K562 (cell line): ENCODE measurements at regions of chr17 and their contacts with region 1.

Region 1: DNA sequence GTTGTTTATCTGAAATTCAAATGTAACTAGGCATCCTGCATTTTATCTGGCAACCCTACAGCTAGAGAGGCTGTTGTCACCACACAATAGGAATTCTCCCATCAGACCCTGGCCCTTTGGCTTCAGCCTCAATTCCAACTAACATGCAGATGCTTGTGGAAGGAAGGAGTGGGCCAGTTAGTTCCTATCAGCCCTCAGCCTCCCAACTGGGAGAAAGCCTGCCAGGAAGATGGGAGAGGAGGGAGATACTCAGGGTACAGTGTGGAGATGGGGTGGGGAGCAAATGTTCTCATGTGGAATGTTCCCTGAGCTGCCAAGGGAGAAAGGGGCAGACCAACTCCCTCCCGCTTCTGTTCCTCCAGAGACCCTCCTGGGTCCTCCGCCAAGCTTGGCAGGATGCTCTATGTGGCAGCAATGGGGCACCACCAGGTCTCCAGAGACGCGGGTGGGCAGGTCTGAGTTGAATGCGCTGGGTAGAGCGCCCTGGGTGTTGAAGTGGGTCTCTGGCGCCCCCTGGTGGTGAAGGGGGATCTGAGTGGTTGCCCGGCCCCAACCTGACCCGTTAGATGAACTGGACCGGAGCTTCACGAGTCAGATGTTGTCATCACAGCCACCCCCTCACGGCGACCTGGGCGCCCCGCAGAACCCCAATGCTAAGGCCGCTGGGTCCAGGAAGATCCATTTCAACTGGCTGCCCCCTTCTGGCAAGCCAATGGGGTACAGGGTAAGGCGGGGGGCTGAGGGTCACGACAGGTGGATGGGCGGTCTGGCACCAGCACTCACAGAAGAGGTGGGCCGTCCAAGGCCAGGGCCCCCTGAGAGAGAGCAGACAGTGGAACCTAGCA is 15.2 kb downstream of the GALK1 start:
- DNase-seq: peak; percentile 81 to 87 (median 86)
- ATAC-seq: peak; percentile 80
- H3K4me3 ChIP-seq: no peak overlapping the region
- H3K27ac ChIP-seq: no peak overlapping the region
- H3K4me1 ChIP-seq: peaks cover 10 to 48% of the 10 kb centered on the region in 2 experiments
- H3K27me3 ChIP-seq: no peaks in the 10 kb centered on the region
- CTCF ChIP-seq: peak; percentile 92 to 94 (median 94)
- EP300 ChIP-seq: no peak
- POLR2A ChIP-seq: no peak
- RAD21 ChIP-seq: peak; percentile 67 to 83

Region 2: DNA sequence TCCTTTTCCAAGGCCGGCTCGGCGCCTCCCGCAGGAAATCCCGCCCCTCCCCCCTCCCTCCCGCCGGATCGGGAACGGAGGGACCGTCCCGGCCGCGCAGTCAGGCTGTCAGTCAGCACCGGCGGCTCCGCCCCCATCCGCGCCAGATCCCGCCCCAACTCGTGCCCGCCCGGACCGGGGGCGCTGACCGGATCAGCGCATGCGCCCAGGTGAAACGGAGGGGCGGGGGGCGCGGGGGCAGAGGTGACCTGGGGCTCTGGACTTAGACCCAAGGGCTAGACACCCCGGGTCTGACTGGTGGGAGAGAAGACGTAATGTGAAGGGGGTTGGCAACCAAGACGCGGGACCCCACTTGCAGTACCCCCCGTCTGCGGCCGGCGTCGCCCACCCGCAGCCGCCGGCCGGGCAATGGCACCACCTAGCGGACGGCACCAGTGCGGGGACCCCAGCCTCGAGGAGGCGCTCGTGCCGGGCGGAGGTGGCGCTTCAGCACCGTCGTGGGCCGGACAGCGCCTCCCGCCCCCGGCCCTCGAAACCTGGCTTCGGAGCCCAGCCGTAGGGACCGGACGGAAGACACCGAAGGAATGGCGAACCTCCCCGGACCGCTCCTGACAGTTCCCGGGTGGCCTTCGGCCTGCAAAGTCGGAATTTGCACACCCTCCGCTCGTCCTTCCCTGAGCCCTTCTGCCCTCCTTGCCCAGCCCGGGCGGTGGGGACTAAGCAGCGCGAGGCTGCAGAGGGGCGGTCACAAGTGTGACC is 234.1 kb before region 1 on chr17 and contains the start of gene CASKIN2:
- CTCF ChIA-PET with region 1: no interaction called
- POLR2A ChIA-PET with region 1: no interaction called
- in situ Hi-C with region 1: no loop called
- intact Hi-C with region 1: loop called (anchors 5 kb)
- DNase-seq: peak; percentile 92 to 99 (median 96)
- ATAC-seq: peak; percentile 82
- H3K4me3 ChIP-seq: peak within 1 kb of the TSS; percentile 91
- H3K27ac ChIP-seq: peak within 1 kb of the TSS; percentile 14; the same call in 2 of the 3 replicates
- H3K4me1 ChIP-seq: peaks cover 34 to 64% of the 10 kb centered on the region in 2 experiments
- H3K27me3 ChIP-seq: no peaks in the 10 kb centered on the region
- CTCF ChIP-seq: peak; percentile 97 to 100 (median 100)
- EP300 ChIP-seq: no peak
- POLR2A ChIP-seq: no peak
- RAD21 ChIP-seq: peak; percentile 86 to 90
- polyA plus RNA-seq, gene CASKIN2: 0.01 to 0.04 TPM

Region 3: GRCh38 chr17:75619506-75620431 is 130.0 kb before region 1 on chr17:
- CTCF ChIA-PET with region 1: interaction called, 9 read pairs
- POLR2A ChIA-PET with region 1: interaction called, 5 read pairs
- in situ Hi-C with region 1: loop called (anchors 5 kb)
- intact Hi-C with region 1: no loop called
- DNase-seq: peak; percentile 67 to 81 (median 75)
- ATAC-seq: peak; percentile 71
- H3K4me3 ChIP-seq: no peak overlapping the region
- H3K27ac ChIP-seq: no peak overlapping the region
- H3K4me1 ChIP-seq: peaks cover 0 to 74% of the 10 kb centered on the region in 2 experiments; a peak in 3 of 5 replicates
- H3K27me3 ChIP-seq: peaks cover 4 to 61% of the 10 kb centered on the region in 2 experiments; a peak in 3 of 5 replicates
- CTCF ChIP-seq: peak; percentile 65 to 79 (median 74)
- EP300 ChIP-seq: no peak
- POLR2A ChIP-seq: no peak
- RAD21 ChIP-seq: peak in 1 of 2 experiments; percentile 58; a peak in 2 of 4 replicates

Region 4: DNA sequence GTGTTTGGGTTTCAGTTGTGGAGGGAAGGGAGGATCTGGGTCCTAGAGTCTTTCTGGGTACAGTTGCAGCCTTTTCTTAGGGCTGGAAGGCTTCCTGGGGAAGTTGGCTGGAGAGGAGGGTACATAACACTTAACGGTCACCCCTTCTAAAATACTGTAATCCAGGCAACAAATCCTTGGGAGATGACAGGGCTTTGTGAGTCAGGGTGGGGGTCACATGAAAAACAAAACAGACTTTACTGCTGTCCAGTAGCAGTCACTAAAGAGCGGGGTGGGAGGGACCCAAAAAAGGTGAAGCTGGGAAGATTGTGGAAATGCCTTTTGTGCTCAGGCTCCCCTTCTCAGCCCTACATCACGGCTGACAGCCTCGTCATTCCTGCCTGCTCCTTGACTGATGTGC is 76.3 kb before region 1 on chr17:
- CTCF ChIA-PET with region 1: interaction called, 16 read pairs
- POLR2A ChIA-PET with region 1: interaction called, 4 read pairs
- in situ Hi-C with region 1: no loop called
- intact Hi-C with region 1: loop called (anchors 1 kb)
- DNase-seq: peak in 2 of 4 experiments; percentile 11 to 23
- ATAC-seq: peak; percentile 58
- H3K4me3 ChIP-seq: no peak overlapping the region
- H3K27ac ChIP-seq: 0 out of 3 replicates have a peak overlapping the region, but pooled peaks have one; percentile 5
- H3K4me1 ChIP-seq: peaks cover 0 to 1% of the 10 kb centered on the region in 2 experiments; a peak in 2 of 5 replicates
- H3K27me3 ChIP-seq: no peaks in the 10 kb centered on the region
- CTCF ChIP-seq: no peak
- EP300 ChIP-seq: no peak
- POLR2A ChIP-seq: no peak
- RAD21 ChIP-seq: no peak

Region 5: GRCh38 chr17:76005263-76006149 is 255.7 kb after region 1 on chr17:
- CTCF ChIA-PET with region 1: interaction called, 3 read pairs
- POLR2A ChIA-PET with region 1: no interaction called
- in situ Hi-C with region 1: no loop called
- intact Hi-C with region 1: loop called (anchors 10 kb)
- DNase-seq: peak; percentile 79 to 89 (median 81)
- ATAC-seq: peak; percentile 89
- H3K4me3 ChIP-seq: no peak overlapping the region
- H3K27ac ChIP-seq: no peak overlapping the region
- H3K4me1 ChIP-seq: peaks cover 0 to 45% of the 10 kb centered on the region in 2 experiments; a peak in 3 of 5 replicates
- H3K27me3 ChIP-seq: peaks cover 31 to 34% of the 10 kb centered on the region in 2 experiments
- CTCF ChIP-seq: peak; percentile 83 to 91 (median 86)
- EP300 ChIP-seq: no peak
- POLR2A ChIP-seq: no peak
- RAD21 ChIP-seq: peak; percentile 96 to 97